PC-3 (cell line): ENCODE measurements at regions of chr13 and their contacts with region 1.

Region 1: DNA sequence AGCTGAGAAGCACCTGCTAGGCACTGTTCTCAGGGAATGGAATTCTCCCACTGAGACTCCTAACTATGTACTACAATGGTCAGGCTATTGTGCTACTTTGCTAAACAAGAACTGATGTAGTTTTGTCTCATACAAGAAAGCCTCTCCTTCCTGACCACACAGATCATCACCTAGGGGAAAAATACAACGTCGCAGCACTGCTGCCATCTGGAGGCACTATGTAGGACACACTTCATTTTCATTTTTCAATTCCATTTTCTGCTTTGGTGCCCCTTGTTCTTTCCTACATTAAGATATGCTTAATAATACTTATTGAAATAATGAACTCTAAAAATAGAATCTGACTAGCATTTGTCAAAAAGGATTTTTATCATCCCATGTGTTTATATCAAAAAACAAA is 21.1 kb downstream of the PROSER1 start:
- DNase-seq: peak; percentile 43
- ATAC-seq: peak; percentile 38; the same call in 1 of the 2 replicates
- H3K4me3 ChIP-seq: no peak overlapping the region
- H3K27ac ChIP-seq: no peak overlapping the region
- H3K4me1 ChIP-seq: no peaks in the 10 kb centered on the region
- H3K27me3 ChIP-seq: no peaks in the 10 kb centered on the region
- CTCF ChIP-seq: peak; percentile 63

Region 2: DNA sequence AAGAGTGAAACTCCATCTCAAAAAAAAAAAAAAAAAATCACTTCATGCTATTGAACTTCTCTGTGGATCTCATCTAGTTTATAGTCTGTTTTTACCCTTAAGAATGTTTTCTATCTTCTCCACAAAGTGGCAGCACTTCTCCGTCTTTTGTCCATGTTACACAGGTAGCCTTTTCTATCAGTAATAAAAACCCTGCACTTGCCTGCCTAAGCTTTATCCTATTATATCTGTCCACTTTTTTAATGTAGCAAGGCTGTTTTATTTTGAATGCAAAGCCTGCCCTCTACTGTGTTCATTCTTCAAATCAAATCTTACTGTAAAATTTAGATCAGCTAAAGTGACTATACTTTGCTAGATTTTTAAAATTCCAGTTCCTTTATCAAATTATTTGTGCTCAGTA is 150.1 kb before region 1 on chr13:
- CTCF ChIA-PET with region 1: no interaction called
- POLR2A ChIA-PET with region 1: no interaction called
- intact Hi-C with region 1: loop called (anchors 2 kb)
- DNase-seq: peak; percentile 34
- ATAC-seq: peak; percentile 55
- H3K4me3 ChIP-seq: no peak overlapping the region
- H3K27ac ChIP-seq: no peak overlapping the region
- H3K4me1 ChIP-seq: no peaks in the 10 kb centered on the region
- H3K27me3 ChIP-seq: peaks cover 45% of the 10 kb centered on the region
- CTCF ChIP-seq: peak; percentile 34

Region 3: GRCh38 chr13:38979891-38980749 is 36.7 kb before region 1 on chr13:
- CTCF ChIA-PET with region 1: no interaction called
- POLR2A ChIA-PET with region 1: no interaction called
- intact Hi-C with region 1: loop called (anchors 2 kb)
- DNase-seq: no peak
- ATAC-seq: no peak
- H3K4me3 ChIP-seq: no peak overlapping the region
- H3K27ac ChIP-seq: no peak overlapping the region
- H3K4me1 ChIP-seq: no peaks in the 10 kb centered on the region
- H3K27me3 ChIP-seq: peaks cover 46% of the 10 kb centered on the region
- CTCF ChIP-seq: no peak

Region 4: DNA sequence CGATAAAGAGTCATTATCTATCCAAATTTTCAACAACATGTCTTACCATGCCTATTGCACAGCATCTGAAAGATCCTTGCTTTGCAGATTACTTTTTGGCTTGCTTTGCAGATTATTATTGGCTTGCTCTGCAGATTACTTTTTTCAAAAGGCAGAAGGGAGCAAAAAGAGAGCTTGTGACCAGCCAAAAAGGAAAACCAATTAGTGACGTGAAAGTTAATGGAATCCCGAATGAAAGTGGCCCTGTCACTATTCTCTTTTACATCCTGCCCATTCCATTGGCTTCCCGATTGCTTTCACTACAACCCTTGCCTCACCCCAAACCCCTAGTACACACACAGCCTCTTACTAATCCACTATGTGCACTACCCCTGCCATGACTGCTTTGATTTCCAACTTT is 504.9 kb after region 1 on chr13:
- CTCF ChIA-PET with region 1: no interaction called
- POLR2A ChIA-PET with region 1: no interaction called
- intact Hi-C with region 1: no loop called
- DNase-seq: no peak
- ATAC-seq: no peak
- H3K4me3 ChIP-seq: no peak overlapping the region
- H3K27ac ChIP-seq: no peak overlapping the region
- H3K4me1 ChIP-seq: no peaks in the 10 kb centered on the region
- H3K27me3 ChIP-seq: no peaks in the 10 kb centered on the region
- CTCF ChIP-seq: no peak